Naive thymus-derived CD4-positive, alpha-beta T cell (primary cell): ENCODE measurements at regions of chr4 and their contacts with region 1.

Region 1: GRCh38 chr4:48079972-48080391 is 54.1 kb downstream of the TXK start:
- DNase-seq: no peak
- ATAC-seq: no peak
- H3K4me3 ChIP-seq: no peak overlapping the region
- H3K4me3 Mint-ChIP-seq: peak overlapping the region in 1 of 10 donors; percentile 45
- H3K27ac ChIP-seq: no peak overlapping the region
- H3K27ac Mint-ChIP-seq: peak overlapping the region in 4 of 9 donors; percentile 40 to 74 (median 60)
- H3K4me1 ChIP-seq: no peaks in the 10 kb centered on the region
- H3K4me1 Mint-ChIP-seq: peaks cover 11 to 62% (median 32%) of the 10 kb centered on the region in 7 donors
- H3K27me3 ChIP-seq: no peaks in the 10 kb centered on the region
- H3K27me3 Mint-ChIP-seq: no peaks in the 10 kb centered on the region

Region 2: GRCh38 chr4:47650584-47651130 is 429.3 kb before region 1 on chr4:
- CTCF ChIA-PET with region 1: no interaction called
- POLR2A ChIA-PET with region 1: no interaction called
- intact Hi-C with region 1: no loop called
- DNase-seq: no peak
- ATAC-seq: no peak
- H3K4me3 ChIP-seq: no peak overlapping the region
- H3K4me3 Mint-ChIP-seq: no peak overlapping the region
- H3K27ac ChIP-seq: no peak overlapping the region
- H3K27ac Mint-ChIP-seq: no peak overlapping the region
- H3K4me1 ChIP-seq: no peaks in the 10 kb centered on the region
- H3K4me1 Mint-ChIP-seq: no peaks in the 10 kb centered on the region
- H3K27me3 ChIP-seq: peaks cover 0 to 4% of the 10 kb centered on the region in 2 donors
- H3K27me3 Mint-ChIP-seq: peaks cover 4 to 20% (median 8%) of the 10 kb centered on the region in 5 donors

Region 3: DNA sequence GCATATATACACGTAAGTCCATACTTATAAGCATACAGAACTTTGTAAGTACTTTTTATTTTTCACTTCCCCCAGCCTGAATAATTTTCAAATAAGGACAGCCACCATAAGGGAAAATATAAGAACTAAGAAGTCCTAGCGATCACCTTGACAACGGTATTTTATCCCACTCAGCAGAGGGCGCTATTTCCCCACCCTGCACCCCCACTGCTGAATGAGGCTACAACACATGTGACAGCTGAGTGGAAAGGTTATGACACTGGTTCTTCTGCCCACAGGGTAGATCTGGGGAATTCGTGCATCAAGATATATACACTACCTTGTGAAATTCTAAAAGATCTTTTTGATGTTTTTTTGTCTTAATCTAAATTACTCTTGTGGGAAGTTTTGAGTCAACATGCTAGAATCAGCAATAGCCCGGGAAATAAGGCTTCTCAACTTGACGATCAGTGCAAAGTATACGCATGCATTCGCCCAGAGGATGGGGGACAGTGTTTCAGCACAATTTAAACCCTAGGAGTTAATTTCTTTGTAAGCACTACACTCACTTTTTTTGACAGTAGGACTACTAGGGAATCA is 393.6 kb before region 1 on chr4:
- CTCF ChIA-PET with region 1: no interaction called
- POLR2A ChIA-PET with region 1: no interaction called
- intact Hi-C with region 1: loop called in 1 of 2 experiments (anchors 10 kb)
- DNase-seq: peak; percentile 24 to 61 (median 48)
- ATAC-seq: peak; percentile 87
- H3K4me3 ChIP-seq: no peak overlapping the region
- H3K4me3 Mint-ChIP-seq: no peak overlapping the region
- H3K27ac ChIP-seq: no peak overlapping the region
- H3K27ac Mint-ChIP-seq: no peak overlapping the region
- H3K4me1 ChIP-seq: no peaks in the 10 kb centered on the region
- H3K4me1 Mint-ChIP-seq: no peaks in the 10 kb centered on the region
- H3K27me3 ChIP-seq: no peaks in the 10 kb centered on the region
- H3K27me3 Mint-ChIP-seq: peaks cover 0 to 27% (median 9%) of the 10 kb centered on the region in 5 donors